ENCODE measurements at regions of chr3 and their contacts with region 1.

Region 1: GRCh38 chr3:134364061-134364935 is 9.9 kb downstream of the AMOTL2 start:
- DNase-seq: peak; percentile 95 to 98
- H3K4me3 ChIP-seq: peak overlapping the region; percentile 54
- H3K27ac ChIP-seq: peak overlapping the region; percentile 100
- H3K4me1 ChIP-seq: peaks cover 96% of the 10 kb centered on the region
- H3K27me3 ChIP-seq: no peaks in the 10 kb centered on the region
- CTCF ChIP-seq: no peak

Region 2: DNA sequence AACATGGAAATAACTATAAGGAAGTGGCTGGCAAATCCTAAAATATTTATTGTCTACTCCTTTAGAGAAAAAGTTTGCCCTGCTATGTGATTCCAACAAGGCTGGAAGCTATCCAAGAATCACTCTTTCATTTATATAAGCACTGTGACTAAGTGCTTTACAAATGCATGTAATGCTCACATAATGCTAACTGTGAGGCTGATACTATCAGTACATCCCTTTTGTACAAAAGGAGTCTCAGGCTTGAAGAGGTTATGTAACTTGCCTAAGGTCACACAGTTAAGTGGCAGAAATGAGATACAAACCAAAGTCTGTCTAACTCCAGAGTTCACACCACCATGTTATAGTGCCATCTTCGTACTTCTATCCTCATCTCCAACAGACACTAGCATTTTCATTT is 719.5 kb before region 1 on chr3:
- CTCF ChIA-PET with region 1: no interaction called
- POLR2A ChIA-PET with region 1: no interaction called
- intact Hi-C with region 1: no loop called
- DNase-seq: peak; percentile 19 to 93
- H3K4me3 ChIP-seq: no peak overlapping the region
- H3K27ac ChIP-seq: peak overlapping the region; percentile 58
- H3K4me1 ChIP-seq: peaks cover 15% of the 10 kb centered on the region
- H3K27me3 ChIP-seq: no peaks in the 10 kb centered on the region
- CTCF ChIP-seq: no peak

Region 3: GRCh38 chr3:134317106-134317947 is 47.0 kb before region 1 on chr3:
- CTCF ChIA-PET with region 1: interaction called, 4 read pairs
- POLR2A ChIA-PET with region 1: interaction called, 56 read pairs
- intact Hi-C with region 1: no loop called
- DNase-seq: peak; percentile 90 to 93
- H3K4me3 ChIP-seq: no peak overlapping the region
- H3K27ac ChIP-seq: peak overlapping the region; percentile 98
- H3K4me1 ChIP-seq: peaks cover 80% of the 10 kb centered on the region
- H3K27me3 ChIP-seq: no peaks in the 10 kb centered on the region
- CTCF ChIP-seq: no peak

Region 4: GRCh38 chr3:134326760-134327593 is 37.3 kb before region 1 on chr3:
- CTCF ChIA-PET with region 1: interaction called, 5 read pairs
- POLR2A ChIA-PET with region 1: interaction called, 14 read pairs
- intact Hi-C with region 1: loop called (anchors 2 kb)
- DNase-seq: peak; percentile 86 to 98
- H3K4me3 ChIP-seq: peak overlapping the region; percentile 23; the same call in 1 of the 2 replicates
- H3K27ac ChIP-seq: peak overlapping the region; percentile 97
- H3K4me1 ChIP-seq: peaks cover 91% of the 10 kb centered on the region
- H3K27me3 ChIP-seq: no peaks in the 10 kb centered on the region
- CTCF ChIP-seq: no peak

Region 5: DNA sequence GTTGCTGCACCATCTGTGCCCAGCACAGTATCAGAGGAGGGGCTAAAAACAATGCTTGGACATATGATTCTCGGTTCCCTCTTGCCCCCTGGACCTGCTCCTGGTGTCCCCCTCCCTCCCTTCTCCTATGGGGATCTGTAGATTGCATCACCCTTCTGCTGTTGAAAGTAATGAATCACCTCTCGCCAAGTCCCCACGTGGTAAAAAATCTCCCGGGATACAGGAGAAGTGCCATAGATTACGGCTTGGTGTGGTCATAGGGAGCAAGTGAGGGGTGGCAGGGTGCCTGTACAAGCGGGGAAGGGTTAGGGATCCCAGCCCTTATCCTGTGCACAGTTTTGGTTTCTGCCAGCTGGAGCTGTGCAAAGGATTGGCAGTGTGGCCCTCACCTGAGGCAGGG is 27.7 kb before region 1 on chr3:
- CTCF ChIA-PET with region 1: interaction called, 5 read pairs
- POLR2A ChIA-PET with region 1: interaction called, 13 read pairs
- intact Hi-C with region 1: no loop called
- DNase-seq: peak; percentile 55 to 69
- H3K4me3 ChIP-seq: no peak overlapping the region
- H3K27ac ChIP-seq: peak overlapping the region; percentile 97
- H3K4me1 ChIP-seq: peaks cover 66% of the 10 kb centered on the region
- H3K27me3 ChIP-seq: no peaks in the 10 kb centered on the region
- CTCF ChIP-seq: no peak

Region 6: GRCh38 chr3:134459562-134459961 is 95.3 kb after region 1 on chr3:
- CTCF ChIA-PET with region 1: no interaction called
- POLR2A ChIA-PET with region 1: interaction called, 13 read pairs
- intact Hi-C with region 1: no loop called
- DNase-seq: no peak
- H3K4me3 ChIP-seq: no peak overlapping the region
- H3K27ac ChIP-seq: no peak overlapping the region
- H3K4me1 ChIP-seq: peaks cover 7% of the 10 kb centered on the region; the same call in 1 of the 2 replicates
- H3K27me3 ChIP-seq: no peaks in the 10 kb centered on the region
- CTCF ChIP-seq: no peak